CD4-positive, alpha-beta T cell (primary cell): ENCODE measurements at regions of chr5 and their contacts with region 1.

Region 1: GRCh38 chr5:178130604-178131485 is at the start of gene RMND5B:
- DNase-seq: peak; percentile 65 to 91 (median 77)
- ATAC-seq: peak; percentile 86
- H3K4me3 ChIP-seq: peak within 1 kb of the TSS; percentile 60
- H3K4me3 Mint-ChIP-seq: peak within 1 kb of the TSS; percentile 90
- H3K27ac ChIP-seq: peak within 1 kb of the TSS; percentile 42 to 69
- H3K27ac Mint-ChIP-seq: peak within 1 kb of the TSS; percentile 75
- H3K4me1 ChIP-seq: peaks cover 19% of the 10 kb centered on the region
- H3K4me1 Mint-ChIP-seq: peaks cover 29% of the 10 kb centered on the region
- H3K27me3 ChIP-seq: no peaks in the 10 kb centered on the region
- H3K27me3 Mint-ChIP-seq: no peaks in the 10 kb centered on the region
- CTCF ChIP-seq: no peak
- total RNA-seq, gene RMND5B: 12.0 to 13.8 TPM

Region 2: GRCh38 chr5:178113199-178113787 is 17.6 kb before region 1 on chr5 and contains the start of gene N4BP3:
- CTCF ChIA-PET with region 1: interaction called, 4 read pairs
- POLR2A ChIA-PET with region 1: no interaction called
- intact Hi-C with region 1: loop called in 1 of 2 experiments (anchors 2 kb)
- DNase-seq: peak; percentile 55 to 93 (median 75)
- ATAC-seq: peak; percentile 69
- H3K4me3 ChIP-seq: peak within 1 kb of the TSS; percentile 55
- H3K4me3 Mint-ChIP-seq: peak within 1 kb of the TSS; percentile 95
- H3K27ac ChIP-seq: no peak within 1 kb of the TSS
- H3K27ac Mint-ChIP-seq: peak within 1 kb of the TSS; percentile 71
- H3K4me1 ChIP-seq: peaks cover 51% of the 10 kb centered on the region
- H3K4me1 Mint-ChIP-seq: peaks cover 40% of the 10 kb centered on the region
- H3K27me3 ChIP-seq: peaks cover 0 to 7% of the 10 kb centered on the region in 2 experiments
- H3K27me3 Mint-ChIP-seq: no peaks in the 10 kb centered on the region
- CTCF ChIP-seq: no peak
- total RNA-seq, gene N4BP3: 3.8 to 4.3 TPM

Region 3: GRCh38 chr5:178881073-178881472 is 750.2 kb after region 1 on chr5:
- CTCF ChIA-PET with region 1: no interaction called
- POLR2A ChIA-PET with region 1: no interaction called
- intact Hi-C with region 1: no loop called
- DNase-seq: no peak
- ATAC-seq: no peak
- H3K4me3 ChIP-seq: no peak overlapping the region
- H3K4me3 Mint-ChIP-seq: no peak overlapping the region
- H3K27ac ChIP-seq: no peak overlapping the region
- H3K27ac Mint-ChIP-seq: no peak overlapping the region
- H3K4me1 ChIP-seq: no peaks in the 10 kb centered on the region
- H3K4me1 Mint-ChIP-seq: no peaks in the 10 kb centered on the region
- H3K27me3 ChIP-seq: no peaks in the 10 kb centered on the region
- H3K27me3 Mint-ChIP-seq: no peaks in the 10 kb centered on the region
- CTCF ChIP-seq: no peak